ENCODE measurements at regions of chr2 and their contacts with region 1.

Region 1: DNA sequence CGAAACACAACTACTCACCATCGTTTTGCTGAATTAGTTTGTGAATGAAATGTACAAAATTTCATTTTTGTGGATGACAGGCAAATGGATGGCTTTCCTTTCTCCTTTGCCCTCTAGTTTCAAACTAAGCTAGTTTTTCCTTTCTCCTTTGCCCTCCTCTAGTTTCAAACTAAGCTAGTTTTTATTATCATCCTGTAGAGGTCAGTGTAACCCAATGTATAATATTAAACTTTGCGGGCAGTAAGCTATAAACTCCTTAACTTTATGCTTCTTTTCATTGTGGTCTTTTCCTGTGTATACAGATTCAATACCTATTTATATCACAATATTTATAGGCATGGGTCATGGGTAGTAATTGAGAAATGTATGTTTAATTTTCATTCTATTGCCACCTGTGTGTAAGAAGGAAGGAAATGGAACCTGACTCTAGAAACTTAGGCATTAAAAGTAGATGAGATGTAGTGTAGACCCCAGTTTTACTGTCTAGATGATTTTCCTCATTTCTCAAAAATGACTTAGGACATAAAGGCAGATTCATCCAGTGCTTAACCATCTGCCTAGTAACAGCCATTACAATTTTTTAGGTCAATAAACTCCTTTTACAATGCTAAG is 58.1 kb downstream of the MAP3K19 start:
- DNase-seq: peak; percentile 33
- ATAC-seq: peak; percentile 81
- H3K4me3 ChIP-seq: no peak overlapping the region
- H3K27ac ChIP-seq: no peak overlapping the region
- H3K4me1 ChIP-seq: no peaks in the 10 kb centered on the region
- H3K27me3 ChIP-seq: peaks cover 0 to 5% of the 10 kb centered on the region in 2 experiments; a peak in 1 of 5 replicates
- CTCF ChIP-seq: peak; percentile 58
- EP300 ChIP-seq: no peak
- POLR2A ChIP-seq: no peak
- RAD21 ChIP-seq: no peak

Region 2: GRCh38 chr2:135709992-135710391 is 720.9 kb after region 1 on chr2:
- CTCF ChIA-PET with region 1: interaction called, 4 read pairs
- POLR2A ChIA-PET with region 1: no interaction called
- in situ Hi-C with region 1: no loop called
- intact Hi-C with region 1: loop called (anchors 1 kb)
- DNase-seq: peak; percentile 44
- ATAC-seq: peak; percentile 87
- H3K4me3 ChIP-seq: no peak overlapping the region
- H3K27ac ChIP-seq: no peak overlapping the region
- H3K4me1 ChIP-seq: no peaks in the 10 kb centered on the region
- H3K27me3 ChIP-seq: no peaks in the 10 kb centered on the region
- CTCF ChIP-seq: peak; percentile 90
- EP300 ChIP-seq: no peak
- POLR2A ChIP-seq: no peak
- RAD21 ChIP-seq: peak; percentile 77

Region 3: DNA sequence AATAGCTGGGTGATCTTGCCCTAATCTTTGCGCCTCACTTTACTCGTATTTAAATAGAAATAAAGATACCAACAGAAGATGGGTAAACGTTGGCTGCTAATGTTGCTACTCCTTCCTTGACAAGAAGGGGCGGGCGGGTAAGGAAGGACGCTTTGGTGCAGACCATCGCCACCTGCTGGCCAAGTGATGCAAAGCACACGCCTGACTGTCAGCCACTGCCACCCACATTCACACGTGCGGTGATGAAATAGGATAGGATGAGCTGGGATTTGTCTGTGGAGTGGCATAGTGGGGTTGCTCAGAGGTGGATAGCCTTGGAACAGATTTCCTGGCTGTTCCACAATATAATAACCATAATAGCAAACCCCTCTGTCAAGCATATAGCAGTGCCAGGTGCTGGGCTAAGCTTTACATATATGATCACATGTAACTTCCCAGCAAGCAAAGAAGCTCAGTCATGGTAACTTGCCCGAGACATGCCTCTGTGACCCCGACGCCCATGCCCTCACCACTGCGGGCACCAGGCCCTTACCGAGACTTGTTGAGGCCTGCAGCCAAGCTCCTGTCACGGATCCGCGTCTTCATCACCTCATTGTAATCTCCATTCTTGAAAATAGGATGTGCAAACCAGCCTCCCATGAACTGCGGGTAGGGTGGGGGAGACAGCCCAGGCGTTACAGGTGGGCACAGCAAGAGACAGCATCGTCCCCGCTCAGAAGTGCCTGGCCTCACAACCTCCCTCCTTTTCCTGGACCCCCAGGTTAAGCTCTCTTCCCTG is 808.6 kb after region 1 on chr2:
- CTCF ChIA-PET with region 1: interaction called, 13 read pairs
- POLR2A ChIA-PET with region 1: no interaction called
- in situ Hi-C with region 1: loop called (anchors 10 kb)
- intact Hi-C with region 1: loop called (anchors 1 kb)
- DNase-seq: peak; percentile 68
- ATAC-seq: peak; percentile 86
- H3K4me3 ChIP-seq: no peak overlapping the region
- H3K27ac ChIP-seq: no peak overlapping the region
- H3K4me1 ChIP-seq: no peaks in the 10 kb centered on the region
- H3K27me3 ChIP-seq: no peaks in the 10 kb centered on the region
- CTCF ChIP-seq: peak; percentile 94
- EP300 ChIP-seq: no peak
- POLR2A ChIP-seq: no peak
- RAD21 ChIP-seq: peak; percentile 54